ENCODE measurements at regions of chr12 and their contacts with region 1.

Region 1: DNA sequence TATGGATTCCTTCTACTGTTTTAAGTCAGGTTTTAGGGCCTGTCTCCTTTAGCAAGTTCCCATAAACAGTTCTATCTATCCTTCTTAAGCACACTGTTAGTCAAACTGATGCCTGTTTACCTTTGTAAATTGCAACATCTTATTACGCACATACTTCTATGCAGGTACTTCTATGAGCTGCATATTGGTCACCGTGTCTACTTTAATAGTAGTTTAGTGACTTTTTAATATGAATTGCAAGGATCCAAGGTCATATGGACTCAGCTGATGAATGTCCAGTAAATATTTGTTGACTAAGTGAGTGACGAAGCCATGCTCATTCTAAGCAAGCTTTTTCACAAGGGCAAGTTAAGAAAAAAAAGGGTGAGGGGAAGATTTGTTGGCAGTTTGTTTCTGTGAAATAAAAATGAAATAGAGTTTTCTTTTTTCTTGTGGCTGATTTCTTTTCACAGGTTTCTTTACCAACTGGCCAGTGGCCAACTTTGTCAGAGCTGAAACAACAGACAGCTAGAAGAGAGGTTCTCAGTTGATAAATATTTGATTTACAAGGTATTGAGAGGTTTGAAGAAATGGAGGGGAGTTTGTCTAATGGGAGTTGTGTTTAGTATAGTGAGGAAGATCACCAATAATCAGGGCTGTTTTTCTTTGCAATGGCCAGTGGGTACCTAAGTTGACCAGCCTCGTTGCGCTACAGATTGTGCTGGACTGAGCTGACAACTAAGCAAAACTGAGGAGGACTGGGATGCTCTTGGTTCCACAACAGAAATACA is 141.1 kb downstream of the SLC15A5 start:
- DNase-seq: no peak
- H3K4me3 ChIP-seq: no peak overlapping the region
- H3K27ac ChIP-seq: no peak overlapping the region
- H3K4me1 ChIP-seq: no peaks in the 10 kb centered on the region
- H3K27me3 ChIP-seq: no peaks in the 10 kb centered on the region
- CTCF ChIP-seq: no peak

Region 2: DNA sequence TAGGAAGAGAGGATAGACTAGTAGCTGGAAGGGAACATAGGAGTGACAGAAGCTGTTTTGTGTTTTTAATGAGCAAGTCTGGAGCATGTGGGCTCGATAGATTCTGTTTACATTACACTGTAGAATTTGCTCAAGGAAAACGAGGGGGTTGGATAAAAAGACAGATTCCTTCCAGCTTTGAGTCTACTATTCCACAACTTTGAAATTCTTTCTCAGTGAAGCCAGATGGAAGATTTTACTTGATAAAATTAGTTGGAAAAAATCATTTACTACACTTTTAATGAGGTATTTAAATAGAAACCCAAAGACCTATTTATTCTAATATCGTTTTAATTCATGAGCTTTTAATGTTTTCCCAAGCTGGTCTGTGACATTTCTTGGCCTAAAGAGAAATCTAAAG is 327.8 kb before region 1 on chr12:
- intact Hi-C with region 1: no loop called
- DNase-seq: no peak
- H3K4me3 ChIP-seq: no peak overlapping the region
- H3K27ac ChIP-seq: peak overlapping the region in 1 of 2 donors; percentile 39
- H3K4me1 ChIP-seq: peaks cover 0 to 27% (median 2%) of the 10 kb centered on the region in 4 donors
- H3K27me3 ChIP-seq: no peaks in the 10 kb centered on the region
- CTCF ChIP-seq: no peak

Region 3: GRCh38 chr12:17642340-17642650 is 1505.9 kb after region 1 on chr12:
- intact Hi-C with region 1: loop called (anchors 5 kb)
- DNase-seq: no peak
- H3K4me3 ChIP-seq: no peak overlapping the region
- H3K27ac ChIP-seq: no peak overlapping the region
- H3K4me1 ChIP-seq: no peaks in the 10 kb centered on the region
- H3K27me3 ChIP-seq: no peaks in the 10 kb centered on the region
- CTCF ChIP-seq: no peak

Measured in tibial artery (tissue), 4 donors.